ENCODE measurements at regions of chr10 and their contacts with region 1.

Region 1: GRCh38 chr10:132551093-132551807 is 13.7 kb downstream of the INPP5A start:
- DNase-seq: no peak
- ATAC-seq: peak; percentile 32
- H3K4me3 Mint-ChIP-seq: peak overlapping the region; percentile 72
- H3K27ac Mint-ChIP-seq: peak overlapping the region; percentile 91
- H3K4me1 Mint-ChIP-seq: peaks cover 55% of the 10 kb centered on the region
- H3K27me3 Mint-ChIP-seq: no peaks in the 10 kb centered on the region
- CTCF ChIP-seq: no peak

Region 2: DNA sequence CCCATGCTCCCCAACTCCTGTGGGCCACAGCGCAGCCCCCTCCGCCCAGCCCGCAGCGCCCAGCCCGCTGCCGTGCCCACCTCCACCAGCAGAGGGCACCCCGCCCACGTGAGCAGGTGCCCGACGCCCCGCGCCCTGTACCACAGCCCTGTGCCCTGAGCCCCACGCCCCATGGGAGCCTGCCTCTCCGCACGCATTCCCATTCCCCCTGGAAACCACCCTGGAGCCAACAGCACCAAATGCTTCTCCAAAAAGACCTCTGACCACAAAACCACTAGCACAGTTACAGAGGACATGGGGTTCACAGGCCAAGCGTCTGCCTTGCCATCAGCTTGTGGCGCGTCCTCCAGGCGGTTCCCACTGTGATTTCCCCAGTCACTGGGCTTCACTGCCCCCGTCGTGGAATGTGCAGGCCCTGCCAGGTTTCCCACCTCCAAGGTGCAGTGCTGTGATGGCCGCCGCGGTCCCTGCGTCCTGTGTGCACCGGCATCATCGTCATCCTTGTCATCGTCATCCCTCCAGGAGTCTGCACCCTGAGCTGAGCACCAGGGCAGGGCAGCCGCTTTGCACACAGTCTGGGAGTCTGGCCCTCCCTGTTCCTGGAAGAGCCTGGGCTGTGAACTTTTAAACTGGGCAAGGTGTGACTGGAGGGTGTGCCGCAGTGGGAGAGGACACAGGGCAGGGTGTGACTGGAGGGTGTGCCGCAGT is 92.5 kb before region 1 on chr10:
- CTCF ChIA-PET with region 1: interaction called, 18 read pairs
- POLR2A ChIA-PET with region 1: no interaction called
- intact Hi-C with region 1: loop called (anchors 1 kb)
- DNase-seq: peak; percentile 80
- ATAC-seq: peak; percentile 94
- H3K4me3 Mint-ChIP-seq: no peak overlapping the region
- H3K27ac Mint-ChIP-seq: no peak overlapping the region
- H3K4me1 Mint-ChIP-seq: peaks cover 3% of the 10 kb centered on the region
- H3K27me3 Mint-ChIP-seq: no peaks in the 10 kb centered on the region
- CTCF ChIP-seq: no peak

Region 3: GRCh38 chr10:132482090-132482800 is 69.0 kb before region 1 on chr10:
- CTCF ChIA-PET with region 1: no interaction called
- POLR2A ChIA-PET with region 1: no interaction called
- intact Hi-C with region 1: no loop called
- DNase-seq: no peak
- ATAC-seq: no peak
- H3K4me3 Mint-ChIP-seq: no peak overlapping the region
- H3K27ac Mint-ChIP-seq: no peak overlapping the region
- H3K4me1 Mint-ChIP-seq: no peaks in the 10 kb centered on the region
- H3K27me3 Mint-ChIP-seq: peaks cover 8% of the 10 kb centered on the region
- CTCF ChIP-seq: no peak

Measured in activated B cell treated with CpG ODN at 0.5 μM for 24 hours (primary cell).